Sigmoid colon (tissue), 7 donors: ENCODE measurements at regions of chr1 and their contacts with region 1.

Region 1: GRCh38 chr1:243343970-243344937 is 88.4 kb downstream of the SDCCAG8 start:
- DNase-seq: no peak
- H3K4me3 ChIP-seq: no peak overlapping the region
- H3K27ac ChIP-seq: no peak overlapping the region
- H3K4me1 ChIP-seq: peaks cover 0 to 4% (median 0%) of the 10 kb centered on the region in 4 donors
- H3K27me3 ChIP-seq: no peaks in the 10 kb centered on the region
- CTCF ChIP-seq: peak; percentile 24 to 73 (median 64)
- EP300 ChIP-seq: no peak
- POLR2A ChIP-seq: no peak

Region 2: GRCh38 chr1:243471754-243472745 is 127.8 kb after region 1 on chr1:
- intact Hi-C with region 1: loop called (anchors 10 kb)
- DNase-seq: no peak
- H3K4me3 ChIP-seq: no peak overlapping the region
- H3K27ac ChIP-seq: no peak overlapping the region
- H3K4me1 ChIP-seq: peaks cover 0 to 26% (median 21%) of the 10 kb centered on the region in 4 donors
- H3K27me3 ChIP-seq: no peaks in the 10 kb centered on the region
- CTCF ChIP-seq: no peak
- EP300 ChIP-seq: no peak
- POLR2A ChIP-seq: no peak